ENCODE measurements at regions of chr2 and their contacts with region 1.

Region 1: DNA sequence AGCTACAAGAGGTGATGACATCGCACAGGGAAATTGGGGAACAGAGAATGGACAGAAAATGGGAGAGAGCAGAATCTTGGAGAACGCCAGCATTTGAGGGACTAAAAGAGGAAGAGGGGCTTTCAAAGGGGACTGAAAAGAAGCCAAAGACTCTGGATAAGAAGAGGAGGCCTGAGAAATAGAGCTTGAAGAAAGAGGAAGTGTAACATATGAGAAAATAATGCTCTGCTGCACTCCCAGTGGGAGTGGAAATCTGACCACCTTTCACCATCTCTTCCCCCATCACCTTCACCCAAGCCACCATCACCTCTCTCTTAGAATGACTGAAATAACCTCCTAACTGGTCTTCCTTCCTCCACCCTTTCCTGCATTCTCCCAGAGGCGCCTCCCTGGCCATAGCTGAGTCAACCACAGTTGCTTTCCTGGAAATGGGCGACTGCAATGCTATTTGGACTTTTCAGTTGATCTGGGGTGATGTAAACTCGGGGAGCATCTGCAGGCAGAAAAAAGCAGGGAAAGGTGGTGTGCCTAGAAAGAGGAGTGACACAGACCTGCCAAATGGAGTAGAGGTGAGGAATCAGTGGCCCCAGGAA is 16.8 kb downstream of the CXCR1 start:
- DNase-seq: no peak
- H3K4me3 ChIP-seq: no peak overlapping the region
- H3K4me3 Mint-ChIP-seq: no peak overlapping the region
- H3K27ac Mint-ChIP-seq: no peak overlapping the region
- H3K4me1 ChIP-seq: no peaks in the 10 kb centered on the region
- H3K4me1 Mint-ChIP-seq: no peaks in the 10 kb centered on the region
- H3K27me3 ChIP-seq: no peaks in the 10 kb centered on the region
- H3K27me3 Mint-ChIP-seq: peaks cover 23% of the 10 kb centered on the region
- CTCF ChIP-seq: no peak

Region 2: GRCh38 chr2:218161644-218162043 is 11.7 kb after region 1 on chr2:
- CTCF ChIA-PET with region 1: no interaction called
- POLR2A ChIA-PET with region 1: no interaction called
- intact Hi-C with region 1: loop called (anchors 2 kb)
- DNase-seq: no peak
- H3K4me3 ChIP-seq: no peak overlapping the region
- H3K4me3 Mint-ChIP-seq: no peak overlapping the region
- H3K27ac Mint-ChIP-seq: no peak overlapping the region
- H3K4me1 ChIP-seq: no peaks in the 10 kb centered on the region
- H3K4me1 Mint-ChIP-seq: no peaks in the 10 kb centered on the region
- H3K27me3 ChIP-seq: no peaks in the 10 kb centered on the region
- H3K27me3 Mint-ChIP-seq: peaks cover 21% of the 10 kb centered on the region
- CTCF ChIP-seq: no peak

Measured in Caco-2 (cell line).